ENCODE measurements at regions of chr13 and their contacts with region 1.

Region 1: GRCh38 chr13:52809310-52809769 is 39.1 kb downstream of the PCDH8 start:
- DNase-seq: peak; percentile 35
- ATAC-seq: peak; percentile 89
- H3K4me3 ChIP-seq: no peak overlapping the region
- H3K27ac ChIP-seq: no peak overlapping the region
- H3K4me1 ChIP-seq: peaks cover 4% of the 10 kb centered on the region; the same call in 1 of the 2 replicates
- H3K27me3 ChIP-seq: no peaks in the 10 kb centered on the region
- CTCF ChIP-seq: peak; percentile 75 to 86 (median 86)
- EP300 ChIP-seq: no peak
- POLR2A ChIP-seq: no peak
- RAD21 ChIP-seq: peak; percentile 86

Region 2: GRCh38 chr13:52652196-52652979 is 157.0 kb before region 1 on chr13 and contains the start of gene SUGT1:
- CTCF ChIA-PET with region 1: interaction called, 39 read pairs
- POLR2A ChIA-PET with region 1: interaction called, 5 read pairs
- RAD21 ChIA-PET with region 1: interaction called, 33 read pairs
- SMC1A ChIA-PET with region 1: interaction called, 23 read pairs
- in situ Hi-C with region 1: no loop called
- intact Hi-C with region 1: no loop called
- DNase-seq: peak; percentile 92
- ATAC-seq: peak; percentile 96
- H3K4me3 ChIP-seq: peak within 1 kb of the TSS; percentile 79
- H3K27ac ChIP-seq: peak within 1 kb of the TSS; percentile 94
- H3K4me1 ChIP-seq: no peaks in the 10 kb centered on the region; the same call in 1 of the 2 replicates
- H3K27me3 ChIP-seq: no peaks in the 10 kb centered on the region
- CTCF ChIP-seq: peak; percentile 55 to 81 (median 73)
- EP300 ChIP-seq: no peak
- POLR2A ChIP-seq: peak; percentile 79
- RAD21 ChIP-seq: no peak
- polyA plus RNA-seq, gene SUGT1: 82.5 to 85.6 TPM

Region 3: GRCh38 chr13:52673465-52673864 is 135.9 kb before region 1 on chr13:
- CTCF ChIA-PET with region 1: interaction called, 43 read pairs
- POLR2A ChIA-PET with region 1: interaction called, 7 read pairs
- RAD21 ChIA-PET with region 1: interaction called, 22 read pairs
- SMC1A ChIA-PET with region 1: interaction called, 28 read pairs
- in situ Hi-C with region 1: loop called (anchors 5 kb)
- intact Hi-C with region 1: no loop called
- DNase-seq: no peak
- ATAC-seq: peak; percentile 42
- H3K4me3 ChIP-seq: no peak overlapping the region
- H3K27ac ChIP-seq: no peak overlapping the region
- H3K4me1 ChIP-seq: no peaks in the 10 kb centered on the region
- H3K27me3 ChIP-seq: no peaks in the 10 kb centered on the region
- CTCF ChIP-seq: no peak
- EP300 ChIP-seq: no peak
- POLR2A ChIP-seq: no peak
- RAD21 ChIP-seq: no peak

Region 4: DNA sequence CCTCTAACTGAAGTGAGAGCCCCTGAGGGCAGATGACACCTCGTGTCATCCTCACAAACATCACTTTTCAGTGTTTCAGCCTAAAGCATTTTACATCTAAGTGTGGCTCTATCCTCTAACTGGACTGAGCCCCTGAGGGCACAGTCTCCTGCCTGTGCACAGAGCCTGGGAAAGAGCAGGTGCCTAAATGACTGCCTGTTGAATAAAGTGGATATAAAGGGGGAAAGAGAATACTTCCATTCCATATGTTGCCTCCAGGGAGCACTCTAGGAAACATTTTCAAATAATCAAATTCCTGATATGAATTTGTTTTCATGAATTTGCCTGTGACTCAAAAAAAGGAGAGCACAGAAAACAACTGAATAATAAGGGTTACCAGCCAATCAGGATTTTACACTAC is 102.0 kb before region 1 on chr13:
- CTCF ChIA-PET with region 1: interaction called, 7 read pairs
- POLR2A ChIA-PET with region 1: no interaction called
- RAD21 ChIA-PET with region 1: interaction called, 16 read pairs
- SMC1A ChIA-PET with region 1: interaction called, 25 read pairs
- in situ Hi-C with region 1: no loop called
- intact Hi-C with region 1: loop called (anchors 1 kb)
- DNase-seq: no peak
- ATAC-seq: no peak
- H3K4me3 ChIP-seq: no peak overlapping the region
- H3K27ac ChIP-seq: no peak overlapping the region
- H3K4me1 ChIP-seq: no peaks in the 10 kb centered on the region
- H3K27me3 ChIP-seq: no peaks in the 10 kb centered on the region
- CTCF ChIP-seq: peak in 1 of 3 experiments; percentile 14; a peak in 1 of 6 replicates
- EP300 ChIP-seq: no peak
- POLR2A ChIP-seq: no peak
- RAD21 ChIP-seq: peak; percentile 25; the same call in 1 of the 2 replicates

Region 5: DNA sequence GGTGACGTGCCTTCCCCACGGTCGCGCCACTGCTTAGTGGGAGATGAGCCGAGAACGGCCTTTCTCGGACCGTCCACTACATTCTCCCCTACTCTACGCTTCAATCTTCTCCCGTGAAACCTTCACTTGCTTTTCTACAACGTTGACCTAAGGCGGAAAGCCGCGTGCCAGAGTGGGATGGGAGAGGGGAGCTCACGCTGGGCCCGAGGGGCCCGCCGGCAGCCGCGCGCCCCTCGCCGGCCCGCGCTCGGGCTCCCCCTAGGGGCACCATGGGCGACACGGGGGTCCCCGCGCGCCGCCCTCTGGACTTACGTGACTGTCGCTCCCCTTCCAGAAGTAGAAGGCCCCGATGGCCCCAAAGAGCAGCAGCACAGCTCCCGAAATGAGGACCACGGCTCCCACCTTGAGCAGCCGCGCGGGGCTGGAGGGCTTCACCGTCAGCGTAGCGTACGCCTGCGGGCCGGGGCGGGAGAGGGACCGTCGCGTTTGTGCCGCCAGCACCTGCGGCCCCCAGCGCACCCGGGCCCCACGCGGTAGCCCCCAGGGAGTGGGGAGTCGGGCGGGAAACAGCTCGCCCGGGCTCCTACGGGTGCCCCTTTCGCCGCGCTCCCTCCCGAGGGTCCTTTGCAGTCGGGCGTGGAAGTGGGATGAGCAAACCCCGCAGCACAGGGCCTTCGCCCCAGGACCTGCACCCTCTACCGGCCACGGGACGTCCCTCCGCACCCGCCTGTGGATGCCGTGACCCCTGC is 70.4 kb before region 1 on chr13:
- CTCF ChIA-PET with region 1: interaction called, 78 read pairs
- POLR2A ChIA-PET with region 1: interaction called, 6 read pairs
- RAD21 ChIA-PET with region 1: interaction called, 49 read pairs
- SMC1A ChIA-PET with region 1: interaction called, 134 read pairs
- in situ Hi-C with region 1: no loop called
- intact Hi-C with region 1: loop called (anchors 5 kb)
- DNase-seq: no peak
- ATAC-seq: peak; percentile 68
- H3K4me3 ChIP-seq: no peak overlapping the region
- H3K27ac ChIP-seq: no peak overlapping the region
- H3K4me1 ChIP-seq: no peaks in the 10 kb centered on the region; the same call in 1 of the 2 replicates
- H3K27me3 ChIP-seq: peaks cover 2 to 14% of the 10 kb centered on the region in 2 experiments; a peak in 3 of 4 replicates
- CTCF ChIP-seq: peak; percentile 27 to 42 (median 27); a peak in 4 of 6 replicates
- EP300 ChIP-seq: no peak
- POLR2A ChIP-seq: no peak
- RAD21 ChIP-seq: peak; percentile 47

Region 6: GRCh38 chr13:52786747-52787146 is 22.6 kb before region 1 on chr13:
- CTCF ChIA-PET with region 1: interaction called, 30 read pairs
- POLR2A ChIA-PET with region 1: interaction called, 3 read pairs
- RAD21 ChIA-PET with region 1: interaction called, 13 read pairs
- SMC1A ChIA-PET with region 1: interaction called, 8 read pairs
- in situ Hi-C with region 1: no loop called
- intact Hi-C with region 1: no loop called
- DNase-seq: no peak
- ATAC-seq: 0 out of 3 replicates have a peak, but pooled peaks have one; percentile 19
- H3K4me3 ChIP-seq: no peak overlapping the region
- H3K27ac ChIP-seq: no peak overlapping the region
- H3K4me1 ChIP-seq: no peaks in the 10 kb centered on the region
- H3K27me3 ChIP-seq: peaks cover 0 to 11% of the 10 kb centered on the region in 2 experiments; a peak in 1 of 4 replicates
- CTCF ChIP-seq: no peak
- EP300 ChIP-seq: no peak
- POLR2A ChIP-seq: no peak
- RAD21 ChIP-seq: no peak

Region 7: GRCh38 chr13:52980695-52981094 is 171.4 kb after region 1 on chr13:
- CTCF ChIA-PET with region 1: no interaction called
- POLR2A ChIA-PET with region 1: no interaction called
- RAD21 ChIA-PET with region 1: no interaction called
- SMC1A ChIA-PET with region 1: no interaction called
- in situ Hi-C with region 1: no loop called
- intact Hi-C with region 1: no loop called
- DNase-seq: no peak
- ATAC-seq: no peak
- H3K4me3 ChIP-seq: no peak overlapping the region
- H3K27ac ChIP-seq: no peak overlapping the region
- H3K4me1 ChIP-seq: no peaks in the 10 kb centered on the region
- H3K27me3 ChIP-seq: no peaks in the 10 kb centered on the region
- CTCF ChIP-seq: no peak
- EP300 ChIP-seq: no peak
- POLR2A ChIP-seq: no peak
- RAD21 ChIP-seq: no peak